ENCODE measurements at regions of chr4 and their contacts with region 1.

Region 1: DNA sequence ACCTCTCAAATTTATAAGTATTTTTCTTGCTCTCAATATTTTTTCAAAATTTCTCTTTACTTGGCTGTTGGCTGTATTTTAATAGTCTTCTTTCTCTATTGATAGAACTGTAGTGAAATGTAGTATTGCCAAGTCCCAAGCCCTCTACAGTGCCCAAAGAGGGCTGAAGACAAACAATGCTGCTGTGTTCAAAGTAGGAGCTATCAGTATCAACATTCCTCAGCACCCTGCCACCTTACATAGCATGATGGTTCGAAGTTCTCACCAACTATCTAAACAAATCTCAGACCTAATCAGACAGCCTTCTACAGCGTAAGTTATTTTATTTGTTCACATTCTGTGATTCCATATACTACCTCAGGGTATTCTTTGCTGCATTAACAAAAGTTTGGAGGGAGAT is 99.1 kb upstream of the ADAD1 start:
- DNase-seq: no peak
- H3K4me3 ChIP-seq: no peak overlapping the region
- H3K27ac ChIP-seq: no peak overlapping the region
- H3K4me1 ChIP-seq: no peaks in the 10 kb centered on the region
- H3K27me3 ChIP-seq: no peaks in the 10 kb centered on the region
- CTCF ChIP-seq: no peak
- POLR2A ChIP-seq: no peak

Region 2: DNA sequence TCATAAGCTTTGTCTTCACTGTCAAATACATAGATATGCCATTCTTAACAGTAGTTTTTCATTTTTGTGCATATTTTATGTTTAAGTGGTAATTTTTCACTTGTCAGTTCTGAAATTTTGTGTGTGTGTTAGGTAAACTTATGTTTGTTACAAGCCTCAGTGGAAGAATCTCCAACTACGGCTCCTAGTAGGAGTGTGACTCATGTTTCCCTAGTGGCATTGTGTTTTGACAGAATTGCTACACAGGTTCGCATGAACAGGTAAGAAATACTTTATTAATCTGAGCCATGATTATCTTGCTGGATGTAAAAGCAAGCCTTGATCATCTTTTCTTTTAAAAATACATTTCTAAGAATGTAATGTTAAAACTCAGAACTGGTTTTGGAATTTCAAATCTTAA is 33.1 kb before region 1 on chr4:
- intact Hi-C with region 1: loop called in 1 of 2 experiments (anchors 5 kb)
- DNase-seq: no peak
- H3K4me3 ChIP-seq: no peak overlapping the region
- H3K27ac ChIP-seq: no peak overlapping the region
- H3K4me1 ChIP-seq: no peaks in the 10 kb centered on the region
- H3K27me3 ChIP-seq: no peaks in the 10 kb centered on the region
- CTCF ChIP-seq: no peak
- POLR2A ChIP-seq: no peak